CD4-positive, alpha-beta memory T cell (primary cell): ENCODE measurements at regions of chr2 and their contacts with region 1.

Region 1: DNA sequence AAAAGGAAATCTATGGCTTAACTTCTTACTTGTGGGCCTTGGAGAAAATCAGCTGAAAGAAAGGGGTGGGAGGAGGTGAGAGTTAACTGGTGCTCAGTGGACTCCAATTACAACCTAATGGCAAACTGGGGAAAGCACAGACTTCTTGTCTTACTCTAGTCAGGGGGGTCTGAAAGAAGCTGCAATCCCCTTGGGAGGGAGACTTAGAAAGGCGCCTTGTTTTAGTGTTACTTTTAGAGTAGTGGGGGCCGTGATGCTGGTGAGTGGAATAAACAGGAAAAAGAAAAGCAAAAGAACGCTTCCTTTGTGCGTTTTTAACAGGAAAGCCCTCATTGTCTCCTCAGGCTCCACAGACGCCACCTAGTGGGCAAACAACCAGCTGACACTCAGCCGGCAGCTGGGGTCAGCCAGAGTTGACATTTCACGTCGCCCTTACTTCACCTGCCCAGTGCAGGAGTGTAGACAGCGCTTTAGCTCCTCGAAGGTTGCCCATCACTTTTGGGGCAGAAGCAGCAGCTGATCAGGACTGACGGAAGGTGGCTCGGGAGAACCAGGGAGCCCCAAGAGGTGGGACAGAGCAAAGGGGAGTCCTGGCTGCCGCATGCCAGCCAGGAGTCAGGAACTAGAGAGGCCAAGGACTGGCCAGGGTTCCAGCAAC is 55.9 kb upstream of the GORASP2 start:
- DNase-seq: peak; percentile 56 to 70 (median 65)
- H3K4me3 ChIP-seq: no peak overlapping the region
- H3K4me3 Mint-ChIP-seq: peak overlapping the region; percentile 59 to 88 (median 80)
- H3K27ac ChIP-seq: no peak overlapping the region
- H3K27ac Mint-ChIP-seq: peak overlapping the region in 4 of 7 donors; percentile 19 to 84 (median 68)
- H3K4me1 ChIP-seq: peaks cover 12% of the 10 kb centered on the region
- H3K4me1 Mint-ChIP-seq: peaks cover 7 to 14% (median 11%) of the 10 kb centered on the region in 4 donors
- H3K27me3 ChIP-seq: no peaks in the 10 kb centered on the region
- H3K27me3 Mint-ChIP-seq: peaks cover 4 to 9% of the 10 kb centered on the region in 2 donors

Region 2: DNA sequence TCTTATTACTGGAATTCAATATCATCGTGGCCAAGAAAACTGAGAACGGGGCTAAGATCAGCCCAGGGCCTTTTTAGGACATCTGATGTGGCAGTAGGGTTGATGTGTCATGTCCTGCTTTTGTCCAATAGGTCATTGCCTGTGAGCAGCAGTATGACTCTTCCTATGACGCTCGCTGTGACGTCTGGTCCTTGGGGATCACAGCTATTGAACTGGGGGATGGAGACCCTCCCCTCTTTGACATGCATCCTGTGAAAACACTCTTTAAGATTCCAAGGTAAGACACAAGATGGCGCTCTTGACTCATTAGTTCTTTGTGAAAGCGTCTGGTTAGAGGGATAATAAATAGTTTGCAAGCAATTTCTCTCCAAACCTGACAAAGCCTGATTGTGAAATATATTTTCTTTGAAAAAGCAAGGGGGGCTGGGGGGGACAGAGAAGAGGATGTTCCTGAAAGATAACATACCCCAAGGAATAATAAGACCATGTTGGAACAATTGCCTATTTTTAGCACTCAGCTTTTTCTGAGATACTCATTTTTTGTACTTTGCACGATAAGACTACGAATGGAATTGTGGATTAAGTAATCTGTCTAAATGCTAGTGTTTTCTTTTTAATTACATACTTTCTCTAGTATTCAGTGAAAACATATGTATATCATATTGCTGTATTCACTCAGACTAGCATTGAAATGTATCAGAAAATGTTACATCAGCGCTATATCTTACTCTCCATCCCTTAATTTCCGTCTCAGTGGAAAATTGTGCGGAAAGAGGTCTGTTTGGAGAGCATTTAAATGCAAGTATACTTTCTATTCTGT is 637.1 kb before region 1 on chr2:
- CTCF ChIA-PET with region 1: no interaction called
- POLR2A ChIA-PET with region 1: no interaction called
- intact Hi-C with region 1: loop called (anchors 5 kb)
- DNase-seq: peak in 1 of 5 donors; percentile 5
- H3K4me3 ChIP-seq: no peak overlapping the region
- H3K4me3 Mint-ChIP-seq: no peak overlapping the region
- H3K27ac ChIP-seq: no peak overlapping the region
- H3K27ac Mint-ChIP-seq: no peak overlapping the region
- H3K4me1 ChIP-seq: no peaks in the 10 kb centered on the region
- H3K4me1 Mint-ChIP-seq: no peaks in the 10 kb centered on the region
- H3K27me3 ChIP-seq: no peaks in the 10 kb centered on the region
- H3K27me3 Mint-ChIP-seq: peaks cover 9 to 10% of the 10 kb centered on the region in 2 donors

Region 3: DNA sequence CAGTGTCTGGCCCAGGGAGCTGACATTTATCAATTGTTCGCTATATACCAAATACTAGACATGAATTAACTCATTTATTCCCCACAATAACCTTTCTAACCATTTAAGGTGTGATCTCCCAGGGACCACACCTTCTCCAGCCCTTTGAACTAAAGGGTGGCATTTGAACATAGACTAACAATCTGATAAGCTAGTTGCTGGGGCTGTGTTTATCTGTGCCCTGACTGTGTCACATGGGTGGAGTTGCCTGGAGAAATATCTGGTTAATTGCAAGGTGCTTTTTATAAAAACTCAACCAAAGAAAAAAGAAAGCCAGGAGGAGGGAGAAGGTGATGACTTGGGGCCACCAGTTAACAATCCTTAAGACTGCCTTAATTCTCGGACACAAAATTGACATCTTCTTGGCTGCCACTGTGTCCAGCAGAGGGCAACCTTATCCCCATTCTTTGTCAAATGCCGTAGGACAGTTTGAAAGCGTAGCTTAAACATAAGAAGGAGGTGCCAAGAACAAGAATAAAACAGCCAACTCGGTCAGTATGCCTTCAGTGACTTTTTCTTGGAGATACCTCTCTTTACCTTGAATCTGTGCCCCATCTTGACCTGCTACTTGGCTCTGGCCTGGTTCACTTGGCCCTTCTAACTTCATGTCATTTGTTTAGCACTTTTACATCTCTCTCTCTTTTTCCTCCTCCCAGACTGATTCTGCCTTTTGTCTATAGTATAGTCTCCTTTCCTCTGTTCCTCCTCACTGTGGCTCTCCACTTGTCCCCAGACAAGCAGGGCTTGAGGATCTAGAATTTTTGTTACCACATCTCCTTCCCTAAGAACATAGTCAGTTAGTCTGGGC is 511.9 kb before region 1 on chr2:
- CTCF ChIA-PET with region 1: interaction called, 24 read pairs
- POLR2A ChIA-PET with region 1: no interaction called
- intact Hi-C with region 1: no loop called
- DNase-seq: peak in 4 of 5 donors; percentile 34 to 46 (median 42)
- H3K4me3 ChIP-seq: no peak overlapping the region
- H3K4me3 Mint-ChIP-seq: no peak overlapping the region
- H3K27ac ChIP-seq: no peak overlapping the region
- H3K27ac Mint-ChIP-seq: no peak overlapping the region
- H3K4me1 ChIP-seq: peaks cover 4% of the 10 kb centered on the region
- H3K4me1 Mint-ChIP-seq: peaks cover 4 to 12% (median 8%) of the 10 kb centered on the region in 4 donors
- H3K27me3 ChIP-seq: peaks cover 3% of the 10 kb centered on the region
- H3K27me3 Mint-ChIP-seq: peaks cover 13 to 23% of the 10 kb centered on the region in 2 donors

Region 4: DNA sequence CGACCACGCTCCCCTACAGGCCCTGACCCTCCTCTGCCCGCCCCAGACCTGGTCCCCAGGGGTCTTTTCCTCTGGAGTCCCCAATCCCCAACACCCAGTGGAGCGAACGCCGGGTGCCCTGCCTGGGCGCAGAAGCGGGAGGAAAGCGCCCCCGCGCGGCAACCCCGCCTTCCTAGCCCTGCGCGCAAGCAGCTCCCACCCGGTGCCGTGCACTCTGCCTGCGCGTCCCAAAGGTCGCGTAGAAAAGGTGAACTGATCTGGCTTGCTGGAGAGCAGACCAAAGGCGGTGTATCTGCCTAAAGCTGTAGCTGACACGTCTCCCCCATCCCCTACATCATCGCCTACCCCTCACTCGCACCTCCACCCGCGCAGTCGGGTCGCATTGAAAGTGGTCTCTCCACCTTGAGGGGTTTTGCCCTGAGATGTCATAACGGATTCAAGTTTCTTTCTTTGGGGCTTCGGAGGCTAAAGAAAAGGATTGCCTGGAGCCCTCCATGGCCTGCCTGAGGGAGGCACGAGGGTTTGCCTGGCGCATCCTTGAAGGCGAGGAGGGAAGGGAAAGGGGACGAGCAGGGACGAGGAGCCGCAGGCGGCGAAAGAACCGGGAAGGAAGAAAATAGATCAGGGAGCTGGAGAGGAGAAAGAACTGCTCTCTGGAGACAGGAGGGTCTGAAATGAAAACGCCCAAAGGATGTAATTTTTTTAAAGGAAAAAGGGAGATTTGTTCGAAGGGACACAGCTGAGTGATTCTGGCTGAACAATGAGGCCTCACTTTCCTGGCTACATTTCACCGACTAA is 50.7 kb before region 1 on chr2:
- CTCF ChIA-PET with region 1: interaction called, 6 read pairs
- POLR2A ChIA-PET with region 1: interaction called, 3 read pairs
- intact Hi-C with region 1: loop called (anchors 2 kb)
- DNase-seq: no peak
- H3K4me3 ChIP-seq: peak overlapping the region in 1 of 2 donors; percentile 51
- H3K4me3 Mint-ChIP-seq: peak overlapping the region; percentile 67 to 94 (median 77)
- H3K27ac ChIP-seq: no peak overlapping the region
- H3K27ac Mint-ChIP-seq: peak overlapping the region in 2 of 7 donors; percentile 56 to 68
- H3K4me1 ChIP-seq: peaks cover 53% of the 10 kb centered on the region
- H3K4me1 Mint-ChIP-seq: peaks cover 33 to 61% (median 43%) of the 10 kb centered on the region in 4 donors
- H3K27me3 ChIP-seq: peaks cover 54% of the 10 kb centered on the region
- H3K27me3 Mint-ChIP-seq: peaks cover 60 to 77% of the 10 kb centered on the region in 2 donors

Region 5: DNA sequence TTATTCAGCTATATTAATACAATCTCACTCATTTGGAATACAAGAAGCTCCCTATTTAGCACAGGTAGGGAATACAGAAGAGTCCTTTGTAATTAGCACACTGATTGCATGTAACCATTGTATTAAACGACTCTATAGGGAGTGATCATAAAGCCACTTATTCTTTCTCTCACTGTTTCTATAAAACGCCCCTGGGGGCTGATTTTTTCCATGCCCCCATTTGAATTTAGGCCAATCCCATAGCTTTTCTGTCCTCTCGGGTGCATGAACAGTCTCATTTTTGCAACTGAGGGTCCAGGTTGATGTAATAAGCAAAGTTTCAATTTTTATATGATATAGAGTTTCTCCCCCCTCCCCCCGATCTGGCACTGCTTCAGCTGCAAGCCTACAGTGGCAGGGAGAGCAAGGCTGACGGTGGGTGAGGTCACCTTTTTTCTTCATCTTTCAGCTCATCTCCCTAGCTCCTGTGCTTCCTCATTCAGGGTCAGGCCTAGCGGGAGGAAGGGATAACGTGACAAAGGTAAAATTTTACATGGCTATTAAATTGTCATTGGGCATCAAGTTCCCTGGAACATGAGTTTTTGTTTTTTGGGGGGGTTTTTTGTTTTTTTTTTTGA is 10.8 kb before region 1 on chr2:
- CTCF ChIA-PET with region 1: interaction called, 35 read pairs
- POLR2A ChIA-PET with region 1: no interaction called
- intact Hi-C with region 1: no loop called
- DNase-seq: no peak
- H3K4me3 ChIP-seq: no peak overlapping the region
- H3K4me3 Mint-ChIP-seq: no peak overlapping the region
- H3K27ac ChIP-seq: no peak overlapping the region
- H3K27ac Mint-ChIP-seq: no peak overlapping the region
- H3K4me1 ChIP-seq: no peaks in the 10 kb centered on the region
- H3K4me1 Mint-ChIP-seq: no peaks in the 10 kb centered on the region
- H3K27me3 ChIP-seq: no peaks in the 10 kb centered on the region
- H3K27me3 Mint-ChIP-seq: peaks cover 4 to 10% of the 10 kb centered on the region in 2 donors

Region 6: GRCh38 chr2:170953941-170954340 is 80.8 kb after region 1 on chr2:
- CTCF ChIA-PET with region 1: no interaction called
- POLR2A ChIA-PET with region 1: no interaction called
- intact Hi-C with region 1: no loop called
- DNase-seq: no peak
- H3K4me3 ChIP-seq: no peak overlapping the region
- H3K4me3 Mint-ChIP-seq: no peak overlapping the region
- H3K27ac ChIP-seq: no peak overlapping the region
- H3K27ac Mint-ChIP-seq: peak overlapping the region in 4 of 7 donors; percentile 8 to 46 (median 28)
- H3K4me1 ChIP-seq: no peaks in the 10 kb centered on the region
- H3K4me1 Mint-ChIP-seq: peaks cover 0 to 4% (median 2%) of the 10 kb centered on the region in 4 donors
- H3K27me3 ChIP-seq: no peaks in the 10 kb centered on the region
- H3K27me3 Mint-ChIP-seq: no peaks in the 10 kb centered on the region